ENCODE measurements at regions of chr20 and their contacts with region 1.

Region 1: DNA sequence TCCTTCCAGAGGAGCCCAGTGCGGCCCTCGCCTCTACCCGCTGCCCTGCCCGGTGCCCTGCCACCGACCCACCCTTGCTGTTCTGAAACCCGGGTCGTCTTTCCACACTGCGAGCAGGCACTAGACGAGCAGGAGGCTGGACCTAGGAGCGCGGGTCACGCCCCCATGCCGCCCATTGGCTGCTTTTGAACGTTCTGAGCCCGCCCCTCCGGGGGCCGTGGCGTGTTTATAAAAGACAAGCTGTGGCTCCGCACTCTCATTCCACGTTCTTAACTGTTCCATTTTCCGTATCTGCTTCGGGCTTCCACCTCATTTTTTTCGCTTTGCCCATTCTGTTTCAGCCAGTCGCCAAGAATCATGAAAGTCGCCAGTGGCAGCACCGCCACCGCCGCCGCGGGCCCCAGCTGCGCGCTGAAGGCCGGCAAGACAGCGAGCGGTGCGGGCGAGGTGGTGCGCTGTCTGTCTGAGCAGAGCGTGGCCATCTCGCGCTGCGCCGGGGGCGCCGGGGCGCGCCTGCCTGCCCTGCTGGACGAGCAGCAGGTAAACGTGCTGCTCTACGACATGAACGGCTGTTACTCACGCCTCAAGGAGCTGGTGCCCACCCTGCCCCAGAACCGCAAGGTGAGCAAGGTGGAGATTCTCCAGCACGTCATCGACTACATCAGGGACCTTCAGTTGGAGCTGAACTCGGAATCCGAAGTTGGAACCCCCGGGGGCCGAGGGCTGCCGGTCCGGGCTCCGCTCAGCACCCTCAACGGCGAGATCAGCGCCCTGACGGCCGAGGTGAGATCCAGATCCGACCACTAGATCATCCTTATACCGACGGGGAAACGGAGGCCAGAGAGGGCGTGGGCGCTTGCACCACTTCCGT is at the start of gene ID1:
- DNase-seq: peak; percentile 91 to 96 (median 95)
- H3K4me3 ChIP-seq: peak within 1 kb of the TSS; percentile 67 to 92 (median 81)
- H3K27ac ChIP-seq: peak within 1 kb of the TSS; percentile 61 to 83
- H3K4me1 ChIP-seq: peaks cover 4 to 61% (median 49%) of the 10 kb centered on the region in 4 experiments
- H3K27me3 ChIP-seq: peaks cover 0 to 21% (median 0%) of the 10 kb centered on the region in 5 experiments

Region 2: DNA sequence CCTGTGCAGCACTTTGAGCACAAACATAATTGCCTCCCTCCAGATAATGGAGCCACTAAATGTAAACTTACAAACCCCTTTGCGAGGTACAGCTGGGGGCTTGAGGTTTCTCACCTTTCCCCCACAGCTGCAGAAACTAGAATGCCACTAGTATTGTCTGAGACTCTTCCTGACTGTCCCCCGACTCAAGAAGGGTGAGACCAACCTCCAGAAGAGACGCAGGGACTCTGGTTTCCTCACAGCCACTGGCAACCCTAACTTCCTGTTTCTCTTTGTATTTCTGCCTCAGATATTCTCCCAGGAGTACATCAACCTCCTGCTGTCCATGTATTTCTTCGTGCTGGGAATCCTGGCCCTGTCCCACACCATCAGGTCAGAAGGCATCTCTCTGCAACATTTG is 67.4 kb before region 1 on chr20:
- CTCF ChIA-PET with region 1: interaction called, 13 read pairs
- POLR2A ChIA-PET with region 1: no interaction called
- DNase-seq: peak in 2 of 3 donors; percentile 33
- H3K4me3 ChIP-seq: peak overlapping the region in 1 of 7 experiments; percentile 19
- H3K27ac ChIP-seq: peak overlapping the region in 1 of 2 experiments; percentile 19
- H3K4me1 ChIP-seq: peaks cover 4 to 21% (median 16%) of the 10 kb centered on the region in 4 experiments
- H3K27me3 ChIP-seq: no peaks in the 10 kb centered on the region

Region 3: DNA sequence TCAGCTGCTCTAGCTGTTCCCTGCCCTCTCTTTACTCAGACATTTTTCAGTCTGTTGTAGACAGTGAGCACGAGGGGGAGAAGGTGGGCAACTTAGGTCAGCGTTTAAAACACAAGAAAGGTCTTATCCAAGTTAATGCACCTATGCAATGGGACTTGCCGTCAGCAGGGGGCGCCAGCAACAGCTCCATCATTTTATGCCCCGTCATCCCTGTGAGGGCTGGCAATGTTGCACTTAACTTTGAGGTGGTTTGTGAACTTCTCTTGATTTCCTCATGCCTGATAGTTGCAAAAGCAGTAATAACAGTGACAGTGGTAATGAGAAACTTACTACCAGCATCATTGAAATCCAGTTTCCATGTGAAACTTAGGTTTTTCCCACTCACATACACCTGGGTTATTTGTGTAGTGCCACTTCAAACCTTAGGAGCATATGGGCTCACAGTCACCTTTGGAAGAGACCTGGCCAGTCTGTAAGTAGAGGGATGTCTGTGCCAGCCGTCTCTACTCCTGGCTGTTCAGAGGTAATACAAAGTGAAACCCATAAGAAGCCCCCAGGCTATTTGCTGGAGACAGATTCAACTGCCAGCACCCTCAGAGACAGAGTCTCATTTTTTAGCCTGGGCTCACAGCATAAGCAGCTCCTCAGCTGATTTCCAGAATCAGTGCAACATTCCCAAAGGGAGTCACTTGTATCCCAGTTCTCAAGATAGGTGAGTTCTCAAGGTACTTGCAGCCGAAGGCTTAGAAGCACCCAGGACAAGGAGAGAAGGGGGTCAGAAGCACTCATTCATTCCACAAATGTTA is 45.0 kb before region 1 on chr20:
- CTCF ChIA-PET with region 1: interaction called, 1,047 read pairs
- POLR2A ChIA-PET with region 1: interaction called, 12 read pairs
- DNase-seq: peak; percentile 86 to 95 (median 92)
- H3K4me3 ChIP-seq: no peak overlapping the region
- H3K27ac ChIP-seq: peak overlapping the region in 1 of 2 experiments; percentile 50
- H3K4me1 ChIP-seq: peaks cover 0 to 16% (median 13%) of the 10 kb centered on the region in 4 experiments
- H3K27me3 ChIP-seq: no peaks in the 10 kb centered on the region

Region 4: DNA sequence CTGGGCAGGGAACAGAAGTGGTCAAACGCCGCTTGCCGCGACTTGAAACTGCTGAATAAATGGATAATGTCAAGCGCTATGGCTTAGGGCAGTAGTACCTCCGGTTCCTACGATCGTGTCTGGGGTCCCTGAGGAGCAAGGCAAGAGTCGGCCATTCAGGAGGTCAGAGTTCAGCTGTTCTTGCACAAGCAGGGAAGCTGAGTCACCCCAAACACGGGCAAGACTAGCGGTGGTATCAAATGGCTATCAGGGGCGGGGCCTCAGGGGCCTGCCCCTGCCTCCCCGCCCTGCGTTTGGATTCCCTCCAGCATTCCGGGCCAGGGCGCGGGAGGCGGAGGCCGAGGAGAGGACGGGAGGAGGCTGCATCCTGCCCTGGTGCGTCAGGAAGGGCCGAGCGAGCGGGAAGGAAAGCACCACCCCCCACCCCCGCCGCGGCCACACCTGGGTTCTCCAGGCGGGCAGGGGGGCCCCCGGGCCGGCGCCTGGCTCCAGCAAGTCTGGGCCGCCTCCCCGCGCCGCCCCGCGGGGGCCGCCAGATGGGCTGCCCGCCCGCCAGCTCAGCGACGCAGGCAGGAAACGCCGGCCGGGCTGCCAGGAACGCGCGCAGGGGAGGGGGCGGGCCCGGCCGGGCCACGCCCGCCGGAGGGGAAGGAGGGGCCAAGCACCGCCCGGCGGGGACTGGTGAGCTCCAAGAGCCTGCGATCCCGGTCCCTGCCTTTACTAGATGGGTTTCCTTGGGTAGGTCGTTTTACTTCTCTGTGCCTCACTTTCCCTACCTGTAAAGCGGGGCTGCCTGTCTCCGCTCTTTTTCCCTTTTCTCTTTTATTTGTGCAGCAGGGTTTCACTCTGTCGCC is 32.3 kb before region 1 on chr20:
- CTCF ChIA-PET with region 1: interaction called, 1,047 read pairs
- POLR2A ChIA-PET with region 1: interaction called, 292 read pairs
- DNase-seq: peak; percentile 88 to 97 (median 95)
- H3K4me3 ChIP-seq: peak overlapping the region; percentile 53 to 92 (median 76)
- H3K27ac ChIP-seq: peak overlapping the region; percentile 77 to 86
- H3K4me1 ChIP-seq: peaks cover 0 to 44% (median 37%) of the 10 kb centered on the region in 4 experiments
- H3K27me3 ChIP-seq: no peaks in the 10 kb centered on the region

Region 5: DNA sequence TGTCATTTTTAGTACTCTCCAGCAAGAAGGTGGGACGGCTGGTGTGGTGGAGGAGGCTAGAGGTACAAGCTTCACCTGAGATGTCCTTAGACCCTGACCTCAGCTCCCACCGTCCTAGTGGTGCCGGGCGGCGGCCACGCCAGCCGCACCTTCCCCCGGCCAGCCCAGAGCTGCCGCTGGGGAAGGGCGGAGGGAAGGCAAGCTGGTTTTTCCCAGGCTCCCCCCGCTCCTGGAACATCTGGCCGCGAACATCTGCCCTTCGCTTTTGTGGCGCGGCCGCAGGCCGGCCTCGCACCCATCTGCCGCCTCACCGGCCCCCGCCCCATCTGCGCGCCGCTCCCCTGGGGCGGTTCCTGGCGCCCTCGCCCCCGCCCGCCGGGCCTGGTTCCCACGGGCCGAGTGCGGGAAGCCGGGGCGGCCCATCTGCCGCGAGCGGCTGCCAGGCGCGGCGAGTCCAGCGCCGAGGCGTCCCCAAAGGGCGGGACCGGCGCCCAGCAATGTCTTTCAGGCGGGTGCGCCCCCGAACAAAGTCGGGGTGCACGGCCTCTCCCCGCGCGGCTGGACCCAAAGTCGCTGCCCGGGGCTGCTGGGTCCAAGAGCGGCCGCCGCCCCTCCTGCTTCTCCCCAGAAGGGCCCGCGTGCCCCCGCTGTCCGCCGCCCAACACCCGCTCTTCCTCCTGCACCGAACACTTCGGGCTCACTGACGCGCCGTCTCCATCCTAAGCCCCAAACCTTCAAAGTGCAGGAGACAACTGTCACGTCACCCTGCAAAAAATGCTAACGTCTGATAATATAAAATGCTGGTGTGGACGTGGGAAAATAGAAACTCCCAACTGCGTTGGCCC is 17.5 kb before region 1 on chr20:
- CTCF ChIA-PET with region 1: interaction called, 35 read pairs
- POLR2A ChIA-PET with region 1: interaction called, 28 read pairs
- DNase-seq: peak in 2 of 3 donors; percentile 43 to 61
- H3K4me3 ChIP-seq: peak overlapping the region; percentile 46 to 75 (median 56)
- H3K27ac ChIP-seq: no peak overlapping the region
- H3K4me1 ChIP-seq: peaks cover 0 to 20% (median 11%) of the 10 kb centered on the region in 4 experiments
- H3K27me3 ChIP-seq: peaks cover 0 to 4% (median 0%) of the 10 kb centered on the region in 5 experiments

Region 6: GRCh38 chr20:31674895-31675827 is 69.9 kb after region 1 on chr20:
- CTCF ChIA-PET with region 1: interaction called, 3 read pairs
- POLR2A ChIA-PET with region 1: interaction called, 11 read pairs
- DNase-seq: peak; percentile 97 to 99 (median 98)
- H3K4me3 ChIP-seq: peak overlapping the region in 6 of 7 experiments; percentile 23 to 68 (median 59)
- H3K27ac ChIP-seq: peak overlapping the region; percentile 43 to 88
- H3K4me1 ChIP-seq: peaks cover 20 to 90% (median 78%) of the 10 kb centered on the region in 4 experiments
- H3K27me3 ChIP-seq: no peaks in the 10 kb centered on the region

Measured in common myeloid progenitor, CD34-positive (primary cell).